ENCODE measurements at regions of chr5 and their contacts with region 1.

Region 1: DNA sequence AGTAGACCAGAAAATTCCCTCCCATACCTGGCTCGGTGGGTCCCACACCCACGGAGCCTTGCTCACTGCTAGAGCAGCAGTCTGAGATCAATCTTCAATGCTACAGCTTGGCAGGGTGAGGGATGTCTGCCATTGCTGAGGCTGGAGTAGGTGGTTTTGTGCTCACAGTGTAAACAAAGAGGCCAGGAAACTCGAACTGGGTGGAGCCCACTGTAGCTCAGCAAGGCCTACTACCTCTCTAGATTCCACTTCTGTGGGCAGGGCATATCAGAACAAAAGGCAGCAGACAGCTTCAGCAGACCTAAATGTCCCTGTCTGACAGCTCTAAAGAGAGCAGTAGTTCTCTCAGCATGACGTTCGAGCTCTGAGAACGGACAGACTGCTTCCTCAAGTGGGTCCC is 5.6 kb upstream of the GZMA start:
- DNase-seq: peak; percentile 79
- ATAC-seq: peak; percentile 43
- H3K4me3 Mint-ChIP-seq: peak overlapping the region; percentile 50
- H3K27ac Mint-ChIP-seq: peak overlapping the region; percentile 86
- H3K4me1 Mint-ChIP-seq: peaks cover 86% of the 10 kb centered on the region
- H3K27me3 Mint-ChIP-seq: no peaks in the 10 kb centered on the region

Region 2: GRCh38 chr5:54743997-54744788 is 352.7 kb before region 1 on chr5:
- CTCF ChIA-PET with region 1: no interaction called
- DNase-seq: peak; percentile 82
- ATAC-seq: peak; percentile 96
- H3K4me3 Mint-ChIP-seq: peak overlapping the region; percentile 23
- H3K27ac Mint-ChIP-seq: peak overlapping the region; percentile 94
- H3K4me1 Mint-ChIP-seq: peaks cover 39% of the 10 kb centered on the region
- H3K27me3 Mint-ChIP-seq: no peaks in the 10 kb centered on the region

Region 3: GRCh38 chr5:55051357-55051756 is 45.5 kb before region 1 on chr5:
- CTCF ChIA-PET with region 1: no interaction called
- DNase-seq: no peak
- ATAC-seq: no peak
- H3K4me3 Mint-ChIP-seq: no peak overlapping the region
- H3K27ac Mint-ChIP-seq: no peak overlapping the region
- H3K4me1 Mint-ChIP-seq: peaks cover 32% of the 10 kb centered on the region
- H3K27me3 Mint-ChIP-seq: no peaks in the 10 kb centered on the region

Region 4: DNA sequence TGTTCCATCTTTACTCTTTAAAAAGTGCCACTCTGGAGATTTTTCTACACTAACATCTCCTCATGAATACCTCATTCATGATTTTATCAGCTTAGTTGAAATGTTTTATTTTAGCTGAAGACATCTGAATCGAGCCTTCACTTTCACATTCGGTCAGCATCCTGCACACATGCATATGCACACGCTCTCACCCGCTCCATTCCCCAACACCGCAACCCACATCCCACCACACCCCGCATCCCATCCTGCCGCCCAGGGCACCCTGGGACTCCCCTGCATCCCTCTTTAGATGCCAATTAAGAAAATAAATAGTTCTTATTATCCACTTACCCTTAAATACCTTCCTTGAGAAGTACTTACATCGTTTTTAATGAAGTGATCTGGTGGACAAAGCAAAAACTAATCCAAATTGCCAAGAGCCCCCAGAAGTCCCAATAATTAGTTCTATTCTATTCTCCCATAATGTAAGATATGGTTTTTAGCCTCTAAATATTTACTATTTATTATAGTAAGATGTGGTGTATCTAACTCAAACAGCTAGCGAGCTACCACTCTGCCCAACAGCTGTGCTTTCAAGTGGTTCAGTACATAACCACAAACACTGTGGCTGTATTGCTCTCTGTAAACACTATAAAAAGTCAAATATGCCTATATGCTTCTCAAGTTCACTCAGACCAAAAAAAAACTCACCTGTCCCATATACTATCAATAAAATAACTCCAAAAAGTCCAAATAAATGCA is 34.7 kb before region 1 on chr5:
- CTCF ChIA-PET with region 1: interaction called, 14 read pairs
- DNase-seq: peak; percentile 93
- ATAC-seq: peak; percentile 87
- H3K4me3 Mint-ChIP-seq: peak overlapping the region; percentile 64
- H3K27ac Mint-ChIP-seq: peak overlapping the region; percentile 92
- H3K4me1 Mint-ChIP-seq: peaks cover 74% of the 10 kb centered on the region
- H3K27me3 Mint-ChIP-seq: no peaks in the 10 kb centered on the region

Measured in activated CD8-positive, alpha-beta memory T cell treated with anti-CD3 and anti-CD28 coated beads, Interleukin-2, amount 10 ng/mL, durations not matched to agents 7 days and 5 days (primary cell).